Posterior vena cava (tissue), 2 donors: ENCODE measurements at regions of chr13 and their contacts with region 1.

Region 1: DNA sequence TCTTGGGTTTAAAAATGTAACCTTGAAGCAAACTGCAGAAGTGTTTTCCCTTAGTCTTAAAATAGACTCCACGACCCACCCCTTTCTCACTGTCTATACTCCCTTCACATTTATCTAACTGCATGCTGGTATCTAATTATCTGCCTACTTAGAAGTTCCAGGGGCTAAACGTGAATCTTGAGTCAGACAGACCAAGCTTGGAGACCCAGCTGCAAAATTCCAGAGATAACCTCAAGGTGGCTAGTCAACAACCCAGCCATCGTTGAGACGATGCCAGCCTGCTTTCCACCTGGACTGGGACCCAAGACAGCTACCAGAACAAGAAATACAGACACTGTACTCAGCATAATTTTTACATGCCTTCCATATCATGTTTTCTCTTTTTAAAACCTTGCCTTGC is 82.1 kb downstream of the CDADC1 start:
- DNase-seq: no peak

Region 2: GRCh38 chr13:48727241-48728011 is 602.4 kb before region 1 on chr13:
- intact Hi-C with region 1: no loop called
- DNase-seq: no peak

Region 3: DNA sequence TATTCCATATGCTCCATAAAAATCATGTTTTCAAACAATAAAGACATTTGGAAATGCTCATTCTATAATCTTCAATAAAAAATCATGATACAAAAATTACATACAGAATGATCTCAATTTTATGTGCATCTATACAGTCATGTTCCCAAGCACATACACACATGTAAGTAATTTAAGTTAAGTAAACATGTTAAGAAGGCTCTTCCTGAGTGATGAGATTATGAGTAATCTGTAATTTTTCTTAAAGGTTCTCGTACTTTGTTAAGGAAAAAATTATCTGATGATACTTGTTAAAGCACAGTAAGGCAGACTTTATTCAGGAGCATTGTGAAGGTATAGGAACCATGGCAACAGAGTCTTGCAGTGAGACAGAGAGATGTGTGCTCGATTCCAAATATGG is 1543.6 kb after region 1 on chr13:
- intact Hi-C with region 1: loop called in 1 of 2 experiments (anchors 5 kb)
- DNase-seq: no peak